ENCODE measurements at regions of chr14 and their contacts with region 1.

Region 1: DNA sequence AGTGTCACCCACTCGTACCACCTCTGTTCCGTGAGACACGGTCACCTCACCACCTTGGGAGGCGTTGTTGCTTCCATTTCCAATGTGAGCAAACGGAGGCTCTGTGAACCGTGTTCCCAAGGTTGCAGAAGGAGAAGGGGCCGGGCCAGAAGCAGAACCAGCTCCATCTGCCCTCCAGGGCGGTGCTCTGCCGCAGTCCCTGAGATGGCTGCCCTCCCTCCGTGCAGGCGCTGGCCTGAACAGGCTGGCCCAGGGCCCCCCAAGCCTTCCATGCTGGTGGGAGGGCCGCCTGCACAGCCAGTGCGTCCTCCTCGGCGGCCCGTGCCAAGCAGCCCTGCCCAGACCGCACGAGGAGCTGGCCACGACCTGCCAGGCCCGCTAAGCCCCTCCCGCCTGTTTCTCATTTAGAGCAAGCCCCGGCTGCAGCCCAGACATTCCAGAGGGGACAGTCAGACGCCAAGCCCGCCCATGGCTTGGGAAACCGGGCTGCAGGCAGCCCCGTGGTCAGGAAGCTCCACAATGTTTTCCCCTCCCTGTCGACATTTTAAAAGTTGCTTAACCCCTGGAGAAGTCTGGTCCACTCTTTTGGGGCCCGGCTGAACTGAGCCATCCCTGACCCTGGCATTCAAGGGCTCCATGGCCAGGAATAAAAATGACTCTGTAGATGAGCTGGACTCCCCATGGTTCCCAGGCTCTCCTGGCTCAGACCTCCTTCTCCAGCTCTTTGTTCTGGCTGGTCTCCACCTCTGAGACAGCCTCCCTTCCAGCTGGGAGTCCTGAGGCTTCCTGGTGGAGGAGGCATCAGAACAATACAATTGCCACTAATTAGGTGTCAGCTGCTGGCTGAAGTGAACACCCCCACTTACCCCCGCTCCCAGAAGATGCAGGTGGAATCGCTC is 236.0 kb downstream of the BCL11B start:
- DNase-seq: peak in 2 of 3 donors; percentile 35 to 42
- H3K4me3 ChIP-seq: peak overlapping the region; percentile 53 to 83 (median 59)
- H3K4me3 Mint-ChIP-seq: peak overlapping the region; percentile 85 to 98
- H3K27ac ChIP-seq: peak overlapping the region; percentile 93 to 96
- H3K27ac Mint-ChIP-seq: peak overlapping the region; percentile 93 to 98 (median 96)
- H3K4me1 ChIP-seq: peaks cover 61 to 63% of the 10 kb centered on the region in 2 donors
- H3K4me1 Mint-ChIP-seq: peaks cover 64% of the 10 kb centered on the region
- H3K27me3 ChIP-seq: no peaks in the 10 kb centered on the region
- H3K27me3 Mint-ChIP-seq: peaks cover 0 to 5% (median 0%) of the 10 kb centered on the region in 3 donors
- CTCF ChIP-seq: no peak

Region 2: DNA sequence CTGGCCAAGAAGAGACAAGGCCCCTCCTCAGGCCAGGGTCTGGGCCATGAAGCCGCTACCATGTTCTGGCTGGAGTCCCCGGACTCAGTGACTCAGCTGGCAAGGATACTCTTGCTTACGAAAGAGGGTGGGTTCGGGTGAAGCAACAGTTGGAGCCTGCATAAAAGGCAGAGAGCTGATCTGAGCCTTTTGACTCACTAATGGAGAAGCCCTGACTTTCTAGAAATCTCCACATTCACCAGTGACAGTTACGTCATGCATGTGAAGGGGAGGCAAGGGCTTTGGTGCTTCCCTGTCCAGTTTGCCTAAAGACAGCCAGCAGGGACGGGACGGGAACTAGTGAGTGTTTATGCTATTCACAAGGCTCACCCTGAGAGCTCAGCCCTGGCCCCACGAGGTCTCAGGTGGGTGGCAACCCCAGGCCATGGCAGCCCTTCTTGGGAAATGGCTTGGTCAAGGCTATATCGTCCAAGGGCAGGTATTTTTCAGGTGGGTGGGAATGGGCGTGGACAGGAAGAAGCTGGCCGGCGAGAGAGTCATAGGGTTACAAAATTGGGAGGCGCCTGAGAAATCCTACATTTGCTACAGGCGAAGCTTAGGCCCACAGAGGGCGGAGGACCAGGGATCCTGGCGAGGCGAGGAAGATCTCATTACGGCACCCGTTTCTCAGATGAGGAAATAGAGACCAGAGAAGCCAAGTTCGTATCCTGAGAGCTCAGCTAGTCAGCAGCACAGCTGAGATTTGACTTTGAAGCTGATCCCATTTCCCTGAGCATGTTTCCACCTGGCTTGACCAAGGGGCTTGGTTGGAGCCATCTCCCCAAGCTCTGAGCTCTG is 78.5 kb before region 1 on chr14:
- intact Hi-C with region 1: loop called (anchors 2 to 5 kb)
- DNase-seq: peak; percentile 89 to 98 (median 98)
- H3K4me3 ChIP-seq: peak overlapping the region in 1 of 3 experiments; percentile 33
- H3K4me3 Mint-ChIP-seq: peak overlapping the region; percentile 43 to 67
- H3K27ac ChIP-seq: peak overlapping the region; percentile 65 to 69
- H3K27ac Mint-ChIP-seq: peak overlapping the region; percentile 83 to 95 (median 95)
- H3K4me1 ChIP-seq: peaks cover 49 to 50% of the 10 kb centered on the region in 2 donors
- H3K4me1 Mint-ChIP-seq: peaks cover 49% of the 10 kb centered on the region
- H3K27me3 ChIP-seq: no peaks in the 10 kb centered on the region
- H3K27me3 Mint-ChIP-seq: peaks cover 0 to 9% (median 7%) of the 10 kb centered on the region in 3 donors
- CTCF ChIP-seq: no peak

Region 3: DNA sequence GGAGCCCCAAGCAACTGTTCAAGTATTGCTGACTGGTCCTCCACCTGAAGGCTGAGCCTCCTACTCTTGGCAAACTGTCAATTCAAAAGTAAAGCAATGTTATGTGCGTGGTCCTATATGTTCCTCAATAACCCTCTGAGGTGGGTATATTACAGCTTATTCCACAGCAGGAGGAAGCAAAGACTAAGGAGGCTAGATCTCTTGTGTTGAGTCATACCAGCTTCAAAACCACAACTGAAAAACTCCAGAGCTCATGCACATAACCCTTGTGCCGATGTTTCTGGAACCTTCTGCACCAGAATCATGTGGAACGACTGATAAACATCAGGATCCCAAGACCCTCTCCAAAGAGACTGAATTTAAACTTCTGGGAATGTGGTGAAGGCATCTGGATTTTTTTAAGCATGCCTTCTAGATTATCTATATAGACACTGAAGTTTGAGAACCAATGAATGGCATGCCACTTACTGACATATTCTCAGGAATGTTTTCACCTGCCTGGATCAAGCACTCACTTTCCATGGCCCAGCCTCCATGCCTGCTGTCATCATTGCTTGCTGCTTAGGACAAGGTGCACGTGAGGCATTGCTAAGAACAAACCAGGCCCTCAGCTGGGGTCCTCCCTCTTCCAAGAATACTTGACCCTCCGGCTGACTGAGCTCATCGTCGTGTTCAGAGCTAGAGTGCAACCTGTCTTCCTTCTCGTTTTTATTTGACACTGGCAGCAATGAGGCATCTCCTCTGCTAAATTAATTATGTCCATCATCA is 41.3 kb after region 1 on chr14:
- intact Hi-C with region 1: loop called in 1 of 2 experiments (anchors 5 kb)
- DNase-seq: peak; percentile 32 to 75 (median 71)
- H3K4me3 ChIP-seq: peak overlapping the region in 1 of 3 experiments; percentile 4
- H3K4me3 Mint-ChIP-seq: no peak overlapping the region
- H3K27ac ChIP-seq: peak overlapping the region in 1 of 2 donors; percentile 72
- H3K27ac Mint-ChIP-seq: peak overlapping the region in 3 of 7 donors; percentile 42 to 79 (median 63)
- H3K4me1 ChIP-seq: peaks cover 51 to 56% of the 10 kb centered on the region in 2 donors
- H3K4me1 Mint-ChIP-seq: peaks cover 55% of the 10 kb centered on the region
- H3K27me3 ChIP-seq: no peaks in the 10 kb centered on the region
- H3K27me3 Mint-ChIP-seq: peaks cover 2 to 8% (median 2%) of the 10 kb centered on the region in 3 donors
- CTCF ChIP-seq: no peak

Region 4: DNA sequence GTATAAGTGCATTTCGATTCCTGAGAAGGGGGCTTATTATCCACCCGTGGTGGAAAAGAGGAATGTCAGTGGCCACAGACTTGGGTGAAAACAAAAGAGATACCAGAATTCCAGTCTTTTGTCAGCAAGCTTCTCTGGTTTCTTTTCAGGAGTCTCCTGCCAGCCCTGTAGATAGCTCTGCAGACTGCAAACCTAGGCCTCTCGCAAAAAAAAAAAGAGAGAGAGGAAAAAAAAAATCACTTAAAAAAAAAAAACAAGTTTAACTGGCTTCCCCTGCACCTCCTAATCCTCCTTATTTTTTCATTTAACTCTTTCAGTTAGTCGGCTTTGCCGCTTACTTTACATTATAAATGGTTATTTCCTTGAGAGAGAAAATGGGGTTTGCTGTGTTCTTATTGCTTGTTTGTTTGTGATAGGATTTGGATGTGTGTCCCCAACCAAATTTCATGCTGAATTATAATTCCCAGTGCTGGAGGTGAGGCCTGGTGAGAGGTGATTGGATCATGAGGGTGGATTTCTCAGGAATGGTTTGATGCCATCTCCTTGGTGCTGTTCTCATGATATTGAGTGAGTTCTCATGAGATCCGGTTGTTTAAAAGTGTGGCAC is 66.0 kb after region 1 on chr14:
- intact Hi-C with region 1: no loop called
- DNase-seq: no peak
- H3K4me3 ChIP-seq: no peak overlapping the region
- H3K4me3 Mint-ChIP-seq: no peak overlapping the region
- H3K27ac ChIP-seq: no peak overlapping the region
- H3K27ac Mint-ChIP-seq: peak overlapping the region in 1 of 7 donors; percentile 6
- H3K4me1 ChIP-seq: no peaks in the 10 kb centered on the region
- H3K4me1 Mint-ChIP-seq: no peaks in the 10 kb centered on the region
- H3K27me3 ChIP-seq: no peaks in the 10 kb centered on the region
- H3K27me3 Mint-ChIP-seq: peaks cover 0 to 6% (median 3%) of the 10 kb centered on the region in 3 donors
- CTCF ChIP-seq: no peak

Measured in CD14-positive monocyte (primary cell).